CD8-positive, alpha-beta memory T cell (primary cell): ENCODE measurements at regions of chr20 and their contacts with region 1.

Region 1: GRCh38 chr20:407133-407952 is 756 bp upstream of the RBCK1 start:
- DNase-seq: peak; percentile 10 to 79 (median 65)
- H3K4me3 ChIP-seq: peak overlapping the region; percentile 69
- H3K4me3 Mint-ChIP-seq: peak overlapping the region; percentile 82 to 96 (median 87)
- H3K27ac ChIP-seq: peak overlapping the region; percentile 56
- H3K27ac Mint-ChIP-seq: peak overlapping the region; percentile 87 to 97 (median 92)
- H3K4me1 ChIP-seq: peaks cover 30% of the 10 kb centered on the region
- H3K4me1 Mint-ChIP-seq: peaks cover 46 to 49% (median 46%) of the 10 kb centered on the region in 3 donors
- H3K27me3 ChIP-seq: no peaks in the 10 kb centered on the region
- H3K27me3 Mint-ChIP-seq: peaks cover 0 to 1% of the 10 kb centered on the region in 2 donors

Region 2: GRCh38 chr20:381581-382290 is 25.6 kb before region 1 on chr20:
- CTCF ChIA-PET with region 1: interaction called, 17 read pairs
- POLR2A ChIA-PET with region 1: interaction called, 3 read pairs
- DNase-seq: peak; percentile 52 to 85 (median 65)
- H3K4me3 ChIP-seq: peak overlapping the region; percentile 53
- H3K4me3 Mint-ChIP-seq: peak overlapping the region; percentile 78 to 93 (median 85)
- H3K27ac ChIP-seq: peak overlapping the region; percentile 74
- H3K27ac Mint-ChIP-seq: peak overlapping the region; percentile 56 to 92 (median 84)
- H3K4me1 ChIP-seq: peaks cover 5% of the 10 kb centered on the region
- H3K4me1 Mint-ChIP-seq: peaks cover 1 to 16% (median 5%) of the 10 kb centered on the region in 3 donors
- H3K27me3 ChIP-seq: no peaks in the 10 kb centered on the region
- H3K27me3 Mint-ChIP-seq: peaks cover 0 to 2% of the 10 kb centered on the region in 2 donors

Region 3: GRCh38 chr20:478949-479429 is 71.6 kb after region 1 on chr20:
- CTCF ChIA-PET with region 1: no interaction called
- POLR2A ChIA-PET with region 1: no interaction called
- DNase-seq: peak in 2 of 5 donors; percentile 61
- H3K4me3 ChIP-seq: no peak overlapping the region
- H3K4me3 Mint-ChIP-seq: no peak overlapping the region
- H3K27ac ChIP-seq: no peak overlapping the region
- H3K27ac Mint-ChIP-seq: peak overlapping the region in 4 of 8 donors; percentile 0 to 91 (median 12)
- H3K4me1 ChIP-seq: peaks cover 6% of the 10 kb centered on the region
- H3K4me1 Mint-ChIP-seq: peaks cover 17 to 33% (median 24%) of the 10 kb centered on the region in 3 donors
- H3K27me3 ChIP-seq: no peaks in the 10 kb centered on the region
- H3K27me3 Mint-ChIP-seq: no peaks in the 10 kb centered on the region